A673 (cell line): ENCODE measurements at regions of chrX and their contacts with region 1.

Region 1: GRCh38 chrX:81195712-81196111 is 6.0 kb downstream of the HMGN5 start:
- DNase-seq: peak; percentile 77
- H3K4me3 ChIP-seq: no peak overlapping the region
- H3K27ac ChIP-seq: no peak overlapping the region
- H3K4me1 ChIP-seq: no peaks in the 10 kb centered on the region
- H3K27me3 ChIP-seq: no peaks in the 10 kb centered on the region
- CTCF ChIP-seq: peak; percentile 76

Region 2: GRCh38 chrX:80876877-80877276 is 318.8 kb before region 1 on chrX:
- CTCF ChIA-PET with region 1: interaction called, 4 read pairs
- POLR2A ChIA-PET with region 1: no interaction called
- intact Hi-C with region 1: loop called (anchors 5 kb)
- DNase-seq: peak; percentile 49
- H3K4me3 ChIP-seq: no peak overlapping the region
- H3K27ac ChIP-seq: no peak overlapping the region
- H3K4me1 ChIP-seq: no peaks in the 10 kb centered on the region
- H3K27me3 ChIP-seq: no peaks in the 10 kb centered on the region
- CTCF ChIP-seq: peak; percentile 58

Region 3: DNA sequence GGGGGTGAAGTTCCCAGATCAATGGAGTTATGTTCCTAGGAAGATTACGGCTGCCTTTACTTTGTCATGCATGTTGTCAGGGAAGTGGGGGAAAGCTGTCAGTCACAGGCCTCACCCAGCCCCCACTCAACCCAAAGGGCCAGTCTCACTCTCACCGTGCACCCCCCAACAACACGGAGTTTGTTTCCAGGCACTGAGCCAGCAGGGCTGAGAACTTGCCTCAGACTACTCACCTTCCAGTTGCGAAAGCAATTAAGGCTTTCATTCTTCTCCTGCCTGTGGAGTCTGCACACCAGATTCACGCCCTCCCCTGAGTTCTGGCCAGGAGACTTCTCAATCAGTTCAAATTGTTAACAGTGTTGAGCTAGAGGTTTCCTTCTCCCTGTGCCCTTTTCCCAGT is 120.5 kb after region 1 on chrX:
- CTCF ChIA-PET with region 1: no interaction called
- POLR2A ChIA-PET with region 1: no interaction called
- intact Hi-C with region 1: no loop called
- DNase-seq: no peak
- H3K4me3 ChIP-seq: no peak overlapping the region
- H3K27ac ChIP-seq: no peak overlapping the region
- H3K4me1 ChIP-seq: no peaks in the 10 kb centered on the region
- H3K27me3 ChIP-seq: no peaks in the 10 kb centered on the region
- CTCF ChIP-seq: no peak

Region 4: GRCh38 chrX:81367291-81367690 is 171.6 kb after region 1 on chrX:
- CTCF ChIA-PET with region 1: no interaction called
- POLR2A ChIA-PET with region 1: no interaction called
- intact Hi-C with region 1: no loop called
- DNase-seq: no peak
- H3K4me3 ChIP-seq: no peak overlapping the region
- H3K27ac ChIP-seq: no peak overlapping the region
- H3K4me1 ChIP-seq: no peaks in the 10 kb centered on the region
- H3K27me3 ChIP-seq: no peaks in the 10 kb centered on the region
- CTCF ChIP-seq: no peak

Region 5: GRCh38 chrX:81405781-81406180 is 210.1 kb after region 1 on chrX:
- CTCF ChIA-PET with region 1: no interaction called
- POLR2A ChIA-PET with region 1: no interaction called
- intact Hi-C with region 1: no loop called
- DNase-seq: no peak
- H3K4me3 ChIP-seq: no peak overlapping the region
- H3K27ac ChIP-seq: no peak overlapping the region
- H3K4me1 ChIP-seq: no peaks in the 10 kb centered on the region
- H3K27me3 ChIP-seq: no peaks in the 10 kb centered on the region
- CTCF ChIP-seq: no peak